Activated CD8-positive, alpha-beta memory T cell treated with anti-CD3 and anti-CD28 coated beads, Interleukin-2, amount 10 ng/mL, durations not matched to agents 7 days and 5 days (primary cell): ENCODE measurements at regions of chr6 and their contacts with region 1.

Region 1: GRCh38 chr6:27772261-27773001 is 139.8 kb downstream of the OR2B2 start:
- DNase-seq: peak; percentile 92
- ATAC-seq: peak; percentile 99
- H3K4me3 Mint-ChIP-seq: peak overlapping the region; percentile 55
- H3K27ac Mint-ChIP-seq: peak overlapping the region; percentile 69
- H3K4me1 Mint-ChIP-seq: peaks cover 26% of the 10 kb centered on the region
- H3K27me3 Mint-ChIP-seq: peaks cover 34% of the 10 kb centered on the region

Region 2: DNA sequence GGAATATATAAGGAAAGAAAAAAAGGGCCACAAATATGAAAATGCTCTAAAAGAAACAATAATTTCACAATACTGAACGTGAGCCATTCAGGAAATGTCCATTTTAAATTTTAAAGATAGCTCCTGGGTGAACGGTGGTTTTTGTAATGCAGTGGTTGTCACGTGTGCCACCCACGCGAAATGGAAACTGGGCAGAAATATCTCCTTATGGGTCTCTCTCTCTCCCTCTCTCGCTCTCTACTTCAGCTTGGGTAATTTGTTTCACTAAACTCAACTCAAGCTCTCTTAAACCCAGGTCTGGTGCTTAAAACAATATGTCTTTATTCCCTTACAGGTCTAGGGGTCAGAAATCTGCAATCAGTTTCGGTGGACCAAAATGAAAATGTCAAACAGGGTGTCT is 11.0 kb before region 1 on chr6:
- CTCF ChIA-PET with region 1: interaction called, 42 read pairs
- DNase-seq: no peak
- ATAC-seq: no peak
- H3K4me3 Mint-ChIP-seq: no peak overlapping the region
- H3K27ac Mint-ChIP-seq: peak overlapping the region; percentile 54
- H3K4me1 Mint-ChIP-seq: peaks cover 29% of the 10 kb centered on the region
- H3K27me3 Mint-ChIP-seq: peaks cover 7% of the 10 kb centered on the region

Region 3: GRCh38 chr6:27785294-27785693 is 12.9 kb after region 1 on chr6:
- CTCF ChIA-PET with region 1: interaction called, 25 read pairs
- DNase-seq: no peak
- ATAC-seq: no peak
- H3K4me3 Mint-ChIP-seq: no peak overlapping the region
- H3K27ac Mint-ChIP-seq: no peak overlapping the region
- H3K4me1 Mint-ChIP-seq: no peaks in the 10 kb centered on the region
- H3K27me3 Mint-ChIP-seq: peaks cover 30% of the 10 kb centered on the region